ENCODE measurements at regions of chr7 and their contacts with region 1.

Region 1: GRCh38 chr7:124152859-124153692 is 120.2 kb upstream of the TMEM229A start:
- DNase-seq: peak; percentile 42
- H3K4me3 ChIP-seq: no peak overlapping the region
- H3K27ac ChIP-seq: no peak overlapping the region
- H3K4me1 ChIP-seq: no peaks in the 10 kb centered on the region
- H3K27me3 ChIP-seq: peaks cover 3% of the 10 kb centered on the region
- CTCF ChIP-seq: peak; percentile 41 to 50

Region 2: DNA sequence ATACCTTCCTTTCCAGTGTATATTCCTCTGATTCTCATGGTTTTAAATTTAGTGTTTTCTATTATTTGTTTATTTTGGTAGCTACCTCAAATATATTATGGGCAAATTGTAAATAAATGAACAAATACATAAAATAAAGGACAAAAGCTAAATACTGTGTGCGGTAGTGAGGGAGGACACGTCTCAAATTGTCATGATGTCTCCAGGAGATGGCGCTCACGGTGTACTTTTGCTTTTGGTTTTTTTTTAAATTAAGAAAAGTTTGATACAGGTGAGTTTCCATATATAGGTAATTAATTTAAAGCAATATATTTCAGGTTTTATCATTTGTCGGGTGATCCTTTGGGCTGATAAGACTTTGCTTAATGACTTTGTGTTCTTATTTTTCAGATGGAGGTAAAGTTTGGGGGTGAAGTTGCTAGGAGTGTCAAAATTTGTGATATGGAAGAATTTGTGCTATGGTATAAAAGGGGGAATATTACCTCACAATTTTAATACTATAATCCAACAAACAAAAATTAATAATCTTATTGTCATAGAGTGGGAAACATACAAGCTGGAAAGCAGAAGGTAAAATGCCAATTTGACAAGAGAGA is 51.8 kb before region 1 on chr7:
- CTCF ChIA-PET with region 1: no interaction called
- dilution Hi-C with region 1: no loop called
- in situ Hi-C with region 1: no loop called
- intact Hi-C with region 1: loop called (anchors 2 kb)
- DNase-seq: no peak
- H3K4me3 ChIP-seq: no peak overlapping the region
- H3K27ac ChIP-seq: no peak overlapping the region
- H3K4me1 ChIP-seq: no peaks in the 10 kb centered on the region
- H3K27me3 ChIP-seq: no peaks in the 10 kb centered on the region
- CTCF ChIP-seq: peak; percentile 35 to 57

Region 3: GRCh38 chr7:124191713-124192112 is 38.6 kb after region 1 on chr7:
- CTCF ChIA-PET with region 1: no interaction called
- dilution Hi-C with region 1: no loop called
- in situ Hi-C with region 1: no loop called
- intact Hi-C with region 1: no loop called
- DNase-seq: no peak
- H3K4me3 ChIP-seq: no peak overlapping the region
- H3K27ac ChIP-seq: no peak overlapping the region
- H3K4me1 ChIP-seq: no peaks in the 10 kb centered on the region
- H3K27me3 ChIP-seq: peaks cover 2% of the 10 kb centered on the region
- CTCF ChIP-seq: no peak

Region 4: DNA sequence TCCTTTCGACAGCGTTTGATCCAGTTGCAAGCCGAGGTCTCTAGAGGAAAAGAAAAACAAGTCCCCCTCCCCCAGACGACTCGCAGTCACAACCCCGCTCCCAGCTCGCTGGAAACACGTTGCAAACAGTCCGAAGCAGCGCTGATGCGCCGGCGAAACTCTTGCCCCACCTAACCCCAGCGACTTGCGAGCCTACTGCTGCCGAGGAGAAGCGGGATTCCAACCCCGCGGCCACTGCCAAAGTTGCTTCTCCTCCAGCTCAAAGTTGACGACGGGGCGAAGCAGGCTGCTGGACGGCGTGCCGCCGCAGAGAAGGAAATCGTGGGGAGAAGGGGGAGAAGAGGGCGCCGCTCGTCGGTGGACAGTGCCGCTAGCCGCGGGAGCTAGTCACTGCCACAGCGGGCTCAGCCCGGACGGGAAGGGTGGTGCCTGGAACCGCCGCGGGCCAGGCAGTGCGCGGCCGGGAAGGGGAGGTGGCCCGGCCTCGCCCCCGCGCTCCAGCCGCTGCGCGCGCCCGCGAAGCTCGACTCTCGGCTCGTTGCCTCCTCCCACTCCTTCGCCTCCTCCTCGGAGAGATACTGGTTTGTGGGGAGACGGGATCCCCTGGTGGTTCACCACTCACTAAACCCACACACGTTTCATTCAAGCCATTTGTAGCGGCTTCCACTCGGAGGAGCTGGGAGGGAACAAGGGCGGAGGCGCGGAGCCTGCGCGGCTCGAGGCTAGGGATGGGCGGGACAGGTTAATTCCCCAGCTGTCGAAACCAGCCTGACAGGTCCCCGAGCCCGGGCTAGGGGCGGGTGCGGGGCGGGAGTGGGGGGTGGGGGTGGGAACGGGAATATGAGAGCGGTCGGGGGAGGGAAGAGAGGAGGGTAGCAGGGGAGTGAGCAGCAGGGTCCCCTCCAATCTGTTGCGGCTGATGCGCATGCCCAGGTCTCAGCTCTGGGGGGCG is 612.6 kb after region 1 on chr7 and contains the start of gene GPR37:
- CTCF ChIA-PET with region 1: no interaction called
- dilution Hi-C with region 1: no loop called
- in situ Hi-C with region 1: no loop called
- intact Hi-C with region 1: loop called (anchors 5 kb)
- DNase-seq: peak; percentile 83
- H3K4me3 ChIP-seq: peak within 1 kb of the TSS; percentile 53 to 74 (median 65)
- H3K27ac ChIP-seq: no peak within 1 kb of the TSS
- H3K4me1 ChIP-seq: peaks cover 16% of the 10 kb centered on the region
- H3K27me3 ChIP-seq: no peaks in the 10 kb centered on the region
- CTCF ChIP-seq: peak; percentile 9 to 61
- total RNA-seq, gene GPR37: 0.85 to 1.2 TPM

Region 5: DNA sequence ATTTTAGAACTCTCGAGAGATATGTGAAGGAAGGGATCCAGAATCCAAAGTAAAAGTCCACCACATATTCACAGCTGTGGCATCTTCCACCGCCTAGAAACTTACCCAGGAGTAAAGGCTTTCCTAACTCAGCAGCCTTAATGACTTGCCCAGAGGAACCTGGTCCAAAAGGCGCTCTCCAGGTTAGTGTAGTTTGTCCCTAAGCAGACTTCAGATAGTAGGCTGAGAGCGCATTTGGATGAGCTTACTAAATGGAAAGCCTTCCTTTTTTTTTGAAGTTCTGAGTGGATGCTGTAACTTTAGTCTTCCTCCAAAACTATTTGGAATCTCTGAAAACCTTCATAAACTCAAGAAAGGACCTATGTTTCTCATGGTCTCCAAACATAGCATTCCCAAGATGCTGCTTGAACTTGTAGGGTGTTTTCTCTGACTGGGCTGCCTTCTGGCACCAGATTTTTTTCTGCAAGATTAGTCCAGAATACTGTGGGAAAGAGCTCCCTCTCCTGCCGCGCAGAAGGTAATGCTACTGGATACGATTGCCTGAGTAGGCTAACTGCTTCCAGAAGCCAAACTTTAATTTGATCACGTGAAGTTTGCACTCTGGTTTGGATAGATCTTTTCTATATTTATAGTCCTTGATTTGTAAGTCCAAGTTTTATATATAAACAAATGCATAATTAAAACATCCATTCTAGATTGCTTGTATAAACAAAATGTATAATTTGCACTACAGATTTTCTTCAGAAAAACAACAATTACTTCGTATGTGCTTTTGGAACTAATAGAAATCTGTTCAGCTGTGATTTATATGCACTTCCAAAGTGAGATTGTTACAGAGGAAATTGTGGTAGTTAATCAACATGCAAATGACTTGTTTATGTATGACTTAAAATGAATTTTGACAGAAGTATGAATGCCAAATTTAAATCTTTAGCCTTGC is 632.1 kb after region 1 on chr7:
- CTCF ChIA-PET with region 1: no interaction called
- dilution Hi-C with region 1: loop called (anchors 25 kb)
- in situ Hi-C with region 1: loop called in 1 of 2 experiments (anchors 10 kb)
- intact Hi-C with region 1: loop called (anchors 1 kb)
- DNase-seq: peak; percentile 30
- H3K4me3 ChIP-seq: no peak overlapping the region
- H3K27ac ChIP-seq: no peak overlapping the region
- H3K4me1 ChIP-seq: no peaks in the 10 kb centered on the region
- H3K27me3 ChIP-seq: peaks cover 2% of the 10 kb centered on the region
- CTCF ChIP-seq: peak; percentile 87 to 90

Region 6: GRCh38 chr7:124790645-124791044 is 637.6 kb after region 1 on chr7:
- CTCF ChIA-PET with region 1: no interaction called
- dilution Hi-C with region 1: loop called (anchors 25 kb)
- in situ Hi-C with region 1: loop called in 1 of 2 experiments (anchors 10 kb)
- intact Hi-C with region 1: loop called (anchors 1 kb)
- DNase-seq: no peak
- H3K4me3 ChIP-seq: no peak overlapping the region
- H3K27ac ChIP-seq: no peak overlapping the region
- H3K4me1 ChIP-seq: no peaks in the 10 kb centered on the region
- H3K27me3 ChIP-seq: peaks cover 2% of the 10 kb centered on the region
- CTCF ChIP-seq: no peak

Region 7: DNA sequence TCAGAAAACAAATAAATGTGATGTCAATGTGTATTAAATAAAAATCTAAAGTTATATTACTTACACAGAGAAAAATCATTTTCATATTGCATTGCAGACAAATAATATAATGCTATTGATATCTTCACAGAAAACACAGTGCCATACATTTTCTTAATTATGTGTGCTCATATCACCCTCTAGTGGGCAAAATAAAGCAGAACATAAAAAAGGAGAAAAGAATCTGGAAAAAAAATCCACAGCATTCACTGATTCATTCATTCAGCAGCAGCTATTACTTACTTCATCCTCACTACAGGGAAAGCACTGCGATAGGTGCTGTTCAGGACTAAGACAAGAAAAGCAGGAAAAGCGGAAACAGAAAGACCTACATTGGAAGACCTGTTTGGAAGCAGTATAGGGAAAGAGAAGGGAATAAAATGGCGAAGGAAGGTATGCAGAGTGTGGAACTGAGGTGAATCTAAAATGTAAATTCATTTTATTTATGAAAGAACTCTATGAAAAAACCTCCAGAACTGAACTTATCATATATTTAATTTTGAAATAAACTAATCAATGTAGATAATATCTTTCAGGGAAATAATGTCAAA is 703.3 kb after region 1 on chr7:
- CTCF ChIA-PET with region 1: no interaction called
- dilution Hi-C with region 1: no loop called
- in situ Hi-C with region 1: no loop called
- intact Hi-C with region 1: loop called (anchors 5 kb)
- DNase-seq: peak; percentile 29
- H3K4me3 ChIP-seq: no peak overlapping the region
- H3K27ac ChIP-seq: no peak overlapping the region
- H3K4me1 ChIP-seq: no peaks in the 10 kb centered on the region
- H3K27me3 ChIP-seq: no peaks in the 10 kb centered on the region
- CTCF ChIP-seq: peak; percentile 59 to 67

Measured in mammary epithelial cell (primary cell).